ENCODE measurements at regions of chr4 and their contacts with region 1.

Region 1: DNA sequence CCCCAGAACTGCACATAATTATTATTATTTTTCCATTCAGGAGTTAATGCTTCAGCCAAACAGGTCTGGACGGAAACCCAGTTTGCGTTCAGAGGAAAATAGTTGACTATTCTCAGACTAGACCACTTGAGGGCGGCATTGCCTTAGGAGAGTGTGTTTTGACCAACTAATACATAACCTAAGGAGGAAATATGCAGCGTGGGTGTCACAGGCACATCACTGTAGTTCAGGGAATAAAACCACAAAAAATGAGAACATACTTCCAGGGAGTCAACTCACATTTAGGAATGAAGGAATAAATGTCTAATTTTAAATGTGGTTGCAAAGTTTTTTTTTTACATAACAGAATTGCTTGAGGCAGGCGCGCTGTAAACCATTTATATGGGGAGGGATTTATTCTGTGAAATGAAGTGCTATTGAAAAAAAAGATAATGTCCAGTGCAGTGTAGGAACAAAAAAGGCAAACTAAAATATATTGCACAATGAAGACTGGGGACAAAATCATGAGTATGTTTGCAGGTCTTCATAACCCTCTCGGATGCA is 93.3 kb downstream of the SYNPO2 start:
- DNase-seq: peak in 4 of 5 donors; percentile 59 to 74 (median 67)
- ATAC-seq: peak; percentile 69 to 81 (median 77)
- H3K4me3 ChIP-seq: peak overlapping the region in 1 of 12 donors; percentile 6
- H3K27ac ChIP-seq: peak overlapping the region in 9 of 12 donors; percentile 18 to 87 (median 59)
- H3K4me1 ChIP-seq: peaks cover 3 to 86% (median 48%) of the 10 kb centered on the region in 12 donors
- H3K27me3 ChIP-seq: no peaks in the 10 kb centered on the region
- CTCF ChIP-seq: peak; percentile 58 to 83 (median 74)
- POLR2A ChIP-seq: no peak

Region 2: DNA sequence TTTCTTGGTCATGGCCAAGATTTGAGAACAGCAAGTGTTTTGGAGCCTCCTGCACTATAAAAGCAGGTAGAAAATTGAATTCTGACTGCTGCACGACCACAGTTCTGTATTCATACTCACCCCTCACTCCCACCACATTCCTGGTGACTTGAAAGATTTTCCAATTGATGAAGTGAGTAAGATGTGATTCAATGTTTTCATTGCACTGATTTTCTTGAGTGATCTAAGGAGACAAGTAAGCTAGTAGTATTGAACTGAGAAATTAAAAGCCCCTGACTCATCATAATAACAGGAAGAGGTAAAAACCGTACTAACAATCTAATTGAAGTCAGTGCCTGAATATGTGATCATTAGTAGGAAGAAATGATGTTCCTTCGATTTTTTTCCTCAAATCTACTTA is 139.9 kb before region 1 on chr4:
- intact Hi-C with region 1: no loop called
- DNase-seq: no peak
- ATAC-seq: no peak
- H3K4me3 ChIP-seq: no peak overlapping the region
- H3K27ac ChIP-seq: no peak overlapping the region
- H3K4me1 ChIP-seq: no peaks in the 10 kb centered on the region
- H3K27me3 ChIP-seq: no peaks in the 10 kb centered on the region
- CTCF ChIP-seq: no peak
- POLR2A ChIP-seq: no peak

Region 3: DNA sequence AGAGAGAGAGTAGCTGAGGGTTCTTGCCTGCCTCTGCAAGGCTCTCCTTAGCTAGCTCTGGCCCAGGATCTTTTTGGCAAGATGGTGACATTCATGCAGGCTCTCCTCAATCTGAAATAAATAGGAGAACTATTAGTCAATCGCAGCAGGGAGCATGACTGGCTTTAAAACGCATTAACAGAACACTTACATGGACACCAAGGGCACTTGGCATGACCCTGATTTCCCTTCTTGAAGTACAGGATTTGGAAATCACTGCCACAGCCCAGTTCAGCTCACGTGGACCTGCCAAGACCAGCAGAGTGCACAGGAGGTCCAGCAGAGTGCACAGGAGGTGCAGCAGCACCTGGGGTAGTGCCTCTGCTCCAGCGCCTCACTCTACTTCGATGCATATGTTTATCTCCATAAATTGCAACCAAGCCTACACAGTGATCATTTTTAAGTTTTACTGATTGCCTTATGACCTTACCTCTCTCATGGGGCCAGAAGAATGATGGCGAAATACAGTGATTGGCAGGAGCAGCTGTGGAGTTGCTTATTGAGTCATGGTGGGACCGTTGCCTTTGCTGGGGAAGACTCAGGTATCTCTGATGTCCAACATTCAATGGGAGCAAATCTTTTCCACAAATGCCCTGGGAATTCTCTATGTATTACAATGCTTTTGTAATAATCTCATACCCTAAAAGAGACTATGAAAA is 29.1 kb after region 1 on chr4:
- intact Hi-C with region 1: no loop called
- DNase-seq: peak in 2 of 5 donors; percentile 45 to 47
- ATAC-seq: peak; percentile 24 to 94 (median 77)
- H3K4me3 ChIP-seq: no peak overlapping the region
- H3K27ac ChIP-seq: peak overlapping the region in 11 of 12 donors; percentile 1 to 83 (median 39)
- H3K4me1 ChIP-seq: peaks cover 0 to 51% (median 25%) of the 10 kb centered on the region in 12 donors
- H3K27me3 ChIP-seq: no peaks in the 10 kb centered on the region
- CTCF ChIP-seq: no peak
- POLR2A ChIP-seq: no peak

Region 4: DNA sequence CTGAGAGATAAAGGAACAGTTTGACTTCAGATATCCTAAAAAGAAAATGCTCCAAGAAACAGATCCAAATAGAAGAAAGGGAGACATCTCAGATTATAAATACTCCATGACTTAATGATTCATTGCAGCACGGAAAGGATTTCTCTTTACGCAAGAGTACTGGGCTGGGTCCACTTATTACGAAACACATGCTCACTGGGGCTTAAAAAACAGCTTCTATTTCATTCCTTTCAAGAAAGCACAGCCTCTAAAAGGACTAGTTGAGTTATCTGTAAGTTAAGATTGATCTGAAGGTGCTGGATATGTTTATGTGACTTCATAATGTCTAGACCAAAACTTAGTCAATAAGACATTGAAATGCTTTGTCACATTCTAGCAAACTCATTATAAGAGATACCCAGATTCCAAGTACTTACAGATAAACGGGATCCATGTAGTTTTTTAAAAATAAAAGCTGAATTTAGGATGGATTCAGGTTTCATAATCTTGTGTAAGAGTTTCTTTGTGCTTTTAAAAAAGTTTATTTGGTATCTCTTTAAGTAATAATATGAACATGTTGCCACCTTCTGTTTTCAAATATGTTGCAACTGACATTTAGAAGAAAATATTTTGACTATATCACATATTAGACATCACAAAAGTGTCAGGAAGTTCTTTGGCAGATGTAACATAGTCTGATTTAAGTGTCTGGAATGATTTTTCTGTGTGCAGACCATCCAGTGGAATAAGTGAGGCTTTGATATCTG is 44.2 kb after region 1 on chr4:
- intact Hi-C with region 1: loop called in 4 of 10 experiments (anchors 5 kb)
- DNase-seq: peak in 2 of 5 donors; percentile 39 to 52
- ATAC-seq: peak; percentile 72 to 87 (median 80)
- H3K4me3 ChIP-seq: peak overlapping the region in 5 of 12 donors; percentile 4 to 43 (median 13)
- H3K27ac ChIP-seq: peak overlapping the region; percentile 19 to 94 (median 87)
- H3K4me1 ChIP-seq: peaks cover 0 to 59% (median 36%) of the 10 kb centered on the region in 12 donors
- H3K27me3 ChIP-seq: no peaks in the 10 kb centered on the region
- CTCF ChIP-seq: no peak
- POLR2A ChIP-seq: no peak

Region 5: GRCh38 chr4:119041951-119042560 is 60.1 kb after region 1 on chr4:
- intact Hi-C with region 1: loop called in 4 of 10 experiments (anchors 5 kb)
- DNase-seq: peak in 3 of 5 donors; percentile 45 to 58 (median 53)
- ATAC-seq: peak; percentile 13 to 71 (median 66)
- H3K4me3 ChIP-seq: no peak overlapping the region
- H3K27ac ChIP-seq: peak overlapping the region in 10 of 12 donors; percentile 27 to 91 (median 70)
- H3K4me1 ChIP-seq: peaks cover 0 to 86% (median 59%) of the 10 kb centered on the region in 12 donors
- H3K27me3 ChIP-seq: no peaks in the 10 kb centered on the region
- CTCF ChIP-seq: peak; percentile 43 to 72 (median 64)
- POLR2A ChIP-seq: no peak

Region 6: GRCh38 chr4:119087121-119087520 is 105.2 kb after region 1 on chr4:
- intact Hi-C with region 1: no loop called
- DNase-seq: no peak
- ATAC-seq: peak in 2 of 4 donors; percentile 32 to 58
- H3K4me3 ChIP-seq: no peak overlapping the region
- H3K27ac ChIP-seq: peak overlapping the region in 5 of 12 donors; percentile 14 to 31 (median 24)
- H3K4me1 ChIP-seq: peaks cover 0 to 10% (median 0%) of the 10 kb centered on the region in 12 donors
- H3K27me3 ChIP-seq: no peaks in the 10 kb centered on the region
- CTCF ChIP-seq: peak in 11 of 12 donors; percentile 7 to 55 (median 39)
- POLR2A ChIP-seq: no peak

Region 7: DNA sequence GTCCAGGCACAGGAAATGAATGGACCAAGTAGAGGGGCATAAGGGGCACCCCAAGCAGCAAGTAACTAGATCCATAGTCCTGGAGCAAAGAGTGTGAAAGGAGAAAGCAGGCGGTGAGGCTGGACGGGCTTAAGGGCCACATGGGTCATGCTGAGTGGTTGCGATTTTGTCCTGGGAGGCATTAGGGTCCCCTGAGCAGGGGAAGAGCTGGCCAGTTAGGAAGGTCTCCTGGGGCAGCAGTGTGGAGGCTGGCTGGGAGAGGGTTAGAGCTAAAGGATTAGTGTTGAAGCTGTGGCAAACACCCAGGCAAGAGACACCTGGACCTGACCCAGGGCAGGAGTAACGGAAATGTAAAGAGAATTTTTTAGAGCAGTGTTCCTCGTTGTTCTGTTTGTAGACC is 180.3 kb after region 1 on chr4:
- intact Hi-C with region 1: loop called in 4 of 10 experiments (anchors 5 to 10 kb)
- DNase-seq: no peak
- ATAC-seq: peak in 3 of 4 donors; percentile 12 to 47 (median 43)
- H3K4me3 ChIP-seq: no peak overlapping the region
- H3K27ac ChIP-seq: peak overlapping the region in 3 of 12 donors; percentile 15 to 26 (median 25)
- H3K4me1 ChIP-seq: peaks cover 0 to 49% (median 8%) of the 10 kb centered on the region in 12 donors
- H3K27me3 ChIP-seq: no peaks in the 10 kb centered on the region
- CTCF ChIP-seq: no peak
- POLR2A ChIP-seq: no peak

Region 8: DNA sequence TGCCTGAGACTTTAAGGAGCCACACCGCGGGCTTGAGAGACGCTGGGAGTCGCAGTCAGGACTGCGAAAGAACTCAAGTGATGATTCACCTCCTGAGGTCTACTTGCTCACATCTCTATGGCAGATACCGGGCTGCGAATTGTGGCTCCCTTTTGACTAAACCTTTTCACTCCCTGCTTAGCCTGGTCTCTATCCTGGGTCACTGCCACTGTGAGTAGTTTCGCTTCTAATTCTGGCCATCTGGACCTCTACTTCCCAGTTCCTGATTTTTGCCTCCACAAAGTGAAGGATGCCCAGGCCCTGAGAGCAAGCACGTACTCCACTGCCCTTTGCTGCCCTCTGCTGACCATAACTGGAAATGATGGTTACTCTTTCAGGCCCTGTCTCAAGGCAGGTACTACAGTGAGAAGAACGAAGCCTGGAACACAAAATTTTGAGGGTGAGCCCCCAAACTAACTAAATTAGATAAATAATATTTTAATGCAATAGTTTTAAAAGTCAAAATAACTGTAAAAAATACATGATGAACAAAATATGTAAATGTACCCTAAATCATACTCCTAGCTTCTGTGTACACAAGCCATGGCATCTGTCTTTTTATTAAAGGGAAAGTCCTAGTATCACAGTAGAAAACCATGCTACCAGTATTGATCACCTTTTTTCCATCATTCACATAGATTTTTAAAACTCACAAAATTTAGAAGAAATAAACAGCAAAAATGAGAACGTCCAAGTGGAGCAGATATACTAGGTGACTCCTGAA is 1068.0 kb after region 1 on chr4:
- intact Hi-C with region 1: loop called in 3 of 10 experiments (anchors 10 kb)
- DNase-seq: peak; percentile 57 to 81 (median 76)
- ATAC-seq: peak; percentile 78 to 95 (median 94)
- H3K4me3 ChIP-seq: peak overlapping the region in 8 of 12 donors; percentile 15 to 54 (median 40)
- H3K27ac ChIP-seq: peak overlapping the region in 10 of 12 donors; percentile 24 to 79 (median 55)
- H3K4me1 ChIP-seq: peaks cover 0 to 12% (median under 1%) of the 10 kb centered on the region in 12 donors
- H3K27me3 ChIP-seq: no peaks in the 10 kb centered on the region
- CTCF ChIP-seq: peak; percentile 76 to 88 (median 84)
- POLR2A ChIP-seq: no peak